ENCODE measurements at regions of chr6 and their contacts with region 1.

Region 1: GRCh38 chr6:121430514-121431460 is 4.7 kb upstream of the GJA1 start:
- DNase-seq: no peak
- ATAC-seq: peak in 2 of 8 donors; percentile 43 to 48
- H3K4me3 ChIP-seq: peak overlapping the region in 2 of 10 donors; percentile 8 to 14
- H3K27ac ChIP-seq: peak overlapping the region in 4 of 10 donors; percentile 6 to 32 (median 26)
- H3K4me1 ChIP-seq: peaks cover 0 to 24% (median 8%) of the 10 kb centered on the region in 9 donors
- H3K27me3 ChIP-seq: peaks cover 0 to 3% (median 0%) of the 10 kb centered on the region in 7 donors
- CTCF ChIP-seq: peak; percentile 44 to 89 (median 66)

Region 2: DNA sequence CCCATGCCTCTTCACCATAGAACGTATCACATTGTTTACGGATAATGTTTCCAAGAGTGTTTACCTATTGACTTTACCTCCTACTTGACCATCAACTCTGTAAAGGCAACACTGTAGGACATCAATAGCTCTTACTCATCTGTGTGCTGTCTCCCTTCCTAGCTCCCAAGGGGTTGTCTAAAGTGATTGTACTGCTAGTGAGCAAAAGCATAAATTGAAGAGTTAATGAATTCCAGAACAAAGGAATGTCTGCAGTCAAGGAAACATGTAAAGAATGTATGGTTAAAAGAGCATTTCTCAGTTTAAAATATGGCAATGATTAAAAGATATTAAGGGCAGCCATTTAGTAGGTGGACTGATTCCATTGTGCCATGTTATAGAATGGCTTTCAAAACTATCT is 1081.9 kb before region 1 on chr6:
- intact Hi-C with region 1: no loop called
- DNase-seq: no peak
- ATAC-seq: no peak
- H3K4me3 ChIP-seq: no peak overlapping the region
- H3K27ac ChIP-seq: no peak overlapping the region
- H3K4me1 ChIP-seq: no peaks in the 10 kb centered on the region
- H3K27me3 ChIP-seq: no peaks in the 10 kb centered on the region
- CTCF ChIP-seq: no peak

Region 3: GRCh38 chr6:121020656-121021055 is 410.1 kb before region 1 on chr6:
- intact Hi-C with region 1: no loop called
- DNase-seq: no peak
- ATAC-seq: no peak
- H3K4me3 ChIP-seq: no peak overlapping the region
- H3K27ac ChIP-seq: no peak overlapping the region
- H3K4me1 ChIP-seq: no peaks in the 10 kb centered on the region
- H3K27me3 ChIP-seq: no peaks in the 10 kb centered on the region
- CTCF ChIP-seq: no peak

Region 4: GRCh38 chr6:121548131-121548530 is 117.3 kb after region 1 on chr6:
- intact Hi-C with region 1: no loop called
- DNase-seq: no peak
- ATAC-seq: no peak
- H3K4me3 ChIP-seq: no peak overlapping the region
- H3K27ac ChIP-seq: no peak overlapping the region
- H3K4me1 ChIP-seq: no peaks in the 10 kb centered on the region
- H3K27me3 ChIP-seq: no peaks in the 10 kb centered on the region
- CTCF ChIP-seq: no peak

Region 5: GRCh38 chr6:121584586-121585369 is 154.0 kb after region 1 on chr6:
- intact Hi-C with region 1: loop called in 2 of 10 experiments (anchors 10 kb)
- DNase-seq: no peak
- ATAC-seq: peak; percentile 16 to 82 (median 79)
- H3K4me3 ChIP-seq: no peak overlapping the region
- H3K27ac ChIP-seq: peak overlapping the region in 6 of 10 donors; percentile 26 to 59 (median 54)
- H3K4me1 ChIP-seq: peaks cover 0 to 26% (median 6%) of the 10 kb centered on the region in 9 donors
- H3K27me3 ChIP-seq: no peaks in the 10 kb centered on the region
- CTCF ChIP-seq: no peak

Region 6: GRCh38 chr6:121666814-121667213 is 236.0 kb after region 1 on chr6:
- intact Hi-C with region 1: loop called in 1 of 10 experiments (anchors 10 kb)
- DNase-seq: peak in 1 of 2 donors; percentile 21
- ATAC-seq: peak; percentile 77 to 98 (median 94)
- H3K4me3 ChIP-seq: no peak overlapping the region
- H3K27ac ChIP-seq: peak overlapping the region in 8 of 10 donors; percentile 41 to 77 (median 58)
- H3K4me1 ChIP-seq: peaks cover 0 to 20% (median 12%) of the 10 kb centered on the region in 9 donors
- H3K27me3 ChIP-seq: no peaks in the 10 kb centered on the region
- CTCF ChIP-seq: no peak

Region 7: DNA sequence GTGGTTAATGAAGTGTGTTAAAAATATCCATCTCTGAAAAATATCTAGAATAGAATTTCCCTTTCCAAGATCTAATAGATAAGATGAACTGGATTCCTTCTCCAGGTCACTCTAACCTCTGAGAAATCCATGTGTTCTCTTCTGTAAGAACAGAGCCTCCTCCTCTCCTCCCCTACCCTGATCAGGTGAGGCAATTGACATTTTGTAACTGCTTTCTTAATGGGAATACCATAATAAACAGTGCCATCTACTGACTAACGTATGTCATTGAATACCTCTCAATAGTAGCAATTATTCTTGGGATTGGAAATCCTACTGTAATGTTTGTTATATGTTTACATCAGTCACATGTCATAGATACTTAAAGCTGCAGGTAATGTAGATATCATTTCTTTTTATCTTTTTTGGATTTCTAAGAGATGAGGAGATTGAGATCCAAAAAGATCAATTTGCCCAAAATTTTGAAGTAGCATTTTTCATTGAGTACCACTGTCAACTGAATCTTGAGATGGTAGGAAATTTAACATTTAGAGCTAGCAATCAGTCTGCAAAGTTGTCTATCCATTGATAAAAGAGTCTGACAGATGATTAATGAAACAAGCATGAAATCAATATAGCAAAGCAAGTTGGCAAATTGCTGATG is 602.9 kb after region 1 on chr6:
- intact Hi-C with region 1: loop called (anchors 1 to 10 kb)
- DNase-seq: no peak
- ATAC-seq: peak; percentile 70 to 91 (median 86)
- H3K4me3 ChIP-seq: no peak overlapping the region
- H3K27ac ChIP-seq: peak overlapping the region in 2 of 10 donors; percentile 19 to 35
- H3K4me1 ChIP-seq: peaks cover 0 to 9% (median 0%) of the 10 kb centered on the region in 9 donors
- H3K27me3 ChIP-seq: no peaks in the 10 kb centered on the region
- CTCF ChIP-seq: peak; percentile 20 to 80 (median 65)

Region 8: DNA sequence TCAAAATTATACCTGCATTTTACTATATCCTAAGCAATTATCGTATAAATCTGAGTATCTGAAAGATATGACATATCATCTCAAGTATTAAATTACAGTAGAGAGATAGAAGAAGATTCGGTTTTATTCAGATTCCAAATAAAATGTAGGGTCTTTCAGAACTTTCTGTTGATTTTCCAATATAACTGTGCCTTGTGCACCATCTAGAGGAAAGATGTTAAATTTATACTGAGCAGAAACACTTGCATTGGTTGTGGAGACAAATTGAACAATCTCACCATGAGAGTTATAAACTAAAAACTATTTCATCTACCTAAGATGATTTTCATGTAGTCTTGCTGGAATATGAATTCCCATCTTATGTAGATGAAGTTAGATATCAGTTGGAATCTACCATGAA is 941.9 kb after region 1 on chr6:
- intact Hi-C with region 1: loop called in 1 of 10 experiments (anchors 10 kb)
- DNase-seq: no peak
- ATAC-seq: no peak
- H3K4me3 ChIP-seq: no peak overlapping the region
- H3K27ac ChIP-seq: no peak overlapping the region
- H3K4me1 ChIP-seq: no peaks in the 10 kb centered on the region
- H3K27me3 ChIP-seq: peaks cover 0 to 7% (median 0%) of the 10 kb centered on the region in 7 donors
- CTCF ChIP-seq: peak in 6 of 9 donors; percentile 24 to 52 (median 44)